BJ (cell line): ENCODE measurements at regions of chr20 and their contacts with region 1.

Region 1: GRCh38 chr20:63309261-63310071 is 16.5 kb downstream of the COL20A1 start:
- DNase-seq: no peak
- H3K4me3 ChIP-seq: no peak overlapping the region
- H3K27me3 ChIP-seq: no peaks in the 10 kb centered on the region; the same call in 1 of the 2 replicates
- CTCF ChIP-seq: peak; percentile 86

Region 2: GRCh38 chr20:63272584-63273579 is 36.6 kb before region 1 on chr20 and contains the start of gene ARFGAP1:
- CTCF ChIA-PET with region 1: interaction called, 12 read pairs
- POLR2A ChIA-PET with region 1: interaction called, 5 read pairs
- DNase-seq: no peak
- H3K4me3 ChIP-seq: peak within 1 kb of the TSS; percentile 99
- H3K27me3 ChIP-seq: peaks cover 1% of the 10 kb centered on the region; the same call in 1 of the 2 replicates
- CTCF ChIP-seq: no peak
- polyA plus RNA-seq, gene ARFGAP1: 49.8 and 76.5 TPM in 2 replicates

Region 3: GRCh38 chr20:63290677-63291472 is 18.6 kb before region 1 on chr20:
- CTCF ChIA-PET with region 1: interaction called, 68 read pairs
- POLR2A ChIA-PET with region 1: no interaction called
- DNase-seq: no peak
- H3K4me3 ChIP-seq: no peak overlapping the region
- H3K27me3 ChIP-seq: peaks cover 9% of the 10 kb centered on the region
- CTCF ChIP-seq: peak; percentile 84

Region 4: DNA sequence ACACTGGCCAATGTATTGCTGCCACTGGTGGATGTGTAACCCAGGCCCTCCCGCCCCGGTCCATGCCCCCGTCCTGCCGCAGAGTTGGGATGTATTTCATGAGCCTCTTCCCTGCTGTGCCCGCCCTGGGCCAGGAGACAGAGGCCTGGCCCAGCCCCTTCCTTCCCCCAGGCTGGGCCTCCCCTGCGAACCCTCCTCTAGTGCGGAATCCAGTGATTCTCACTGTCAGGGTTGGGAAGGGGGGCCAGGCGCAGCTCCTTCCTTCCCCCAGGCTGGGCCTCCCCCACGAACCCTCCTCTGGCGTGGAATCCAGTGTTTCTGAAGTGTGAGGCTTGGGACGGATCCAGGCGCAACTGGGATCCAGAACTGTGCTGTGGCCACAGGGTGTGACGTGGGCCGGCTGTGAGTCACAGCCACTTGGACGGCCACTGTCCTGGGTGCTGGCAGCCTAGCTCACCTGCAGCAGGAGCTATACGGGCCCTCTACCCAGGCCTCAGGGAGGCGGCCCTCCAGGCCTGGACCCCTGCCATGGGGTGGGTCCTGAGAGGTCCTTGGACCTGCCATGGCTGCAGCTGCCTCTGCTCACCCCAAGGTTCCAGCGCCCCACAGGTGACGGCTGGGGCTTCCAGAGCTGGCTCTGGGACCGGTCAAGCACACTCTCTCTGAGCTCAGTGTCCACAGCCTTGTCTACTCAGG is 11.8 kb after region 1 on chr20:
- CTCF ChIA-PET with region 1: interaction called, 26 read pairs
- POLR2A ChIA-PET with region 1: no interaction called
- DNase-seq: peak; percentile 5
- H3K4me3 ChIP-seq: no peak overlapping the region
- H3K27me3 ChIP-seq: peaks cover 5% of the 10 kb centered on the region
- CTCF ChIP-seq: no peak

Region 5: DNA sequence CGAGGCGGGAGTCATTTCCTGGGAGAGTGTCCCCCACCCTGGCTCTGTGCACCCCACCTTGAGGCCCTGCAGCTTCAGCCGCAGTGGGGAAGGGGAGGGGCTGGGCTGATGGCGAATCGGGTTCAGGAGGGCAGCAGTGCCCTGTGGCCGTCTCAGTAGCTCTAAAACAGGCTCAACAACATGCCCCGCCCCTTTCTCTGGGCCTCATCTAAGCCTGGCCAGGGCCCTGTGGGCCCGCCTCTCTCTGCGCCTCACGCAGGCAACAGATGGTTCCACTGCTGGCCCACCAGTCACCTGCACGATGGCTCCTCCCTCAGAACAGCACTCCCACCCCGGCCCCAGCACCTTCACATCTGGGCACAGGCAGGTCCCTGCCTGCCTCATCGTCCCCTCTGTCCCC is 21.5 kb after region 1 on chr20:
- CTCF ChIA-PET with region 1: interaction called, 15 read pairs
- POLR2A ChIA-PET with region 1: no interaction called
- DNase-seq: no peak
- H3K4me3 ChIP-seq: no peak overlapping the region
- H3K27me3 ChIP-seq: no peaks in the 10 kb centered on the region; the same call in 1 of the 2 replicates
- CTCF ChIP-seq: no peak

Region 6: GRCh38 chr20:63381807-63382322 is 72.4 kb after region 1 on chr20:
- CTCF ChIA-PET with region 1: interaction called, 107 read pairs
- POLR2A ChIA-PET with region 1: no interaction called
- DNase-seq: no peak
- H3K4me3 ChIP-seq: no peak overlapping the region
- H3K27me3 ChIP-seq: peaks cover 2% of the 10 kb centered on the region; the same call in 1 of the 2 replicates
- CTCF ChIP-seq: peak; percentile 96

Region 7: GRCh38 chr20:63411898-63412631 is 102.6 kb after region 1 on chr20:
- CTCF ChIA-PET with region 1: no interaction called
- POLR2A ChIA-PET with region 1: no interaction called
- DNase-seq: no peak
- H3K4me3 ChIP-seq: no peak overlapping the region
- H3K27me3 ChIP-seq: peaks cover 11% of the 10 kb centered on the region
- CTCF ChIP-seq: no peak

Region 8: GRCh38 chr20:63442100-63442493 is 132.6 kb after region 1 on chr20:
- CTCF ChIA-PET with region 1: no interaction called
- POLR2A ChIA-PET with region 1: no interaction called
- DNase-seq: no peak
- H3K4me3 ChIP-seq: no peak overlapping the region
- H3K27me3 ChIP-seq: peaks cover 1% of the 10 kb centered on the region
- CTCF ChIP-seq: peak; percentile 57